ENCODE measurements at regions of chr15 and their contacts with region 1.

Region 1: DNA sequence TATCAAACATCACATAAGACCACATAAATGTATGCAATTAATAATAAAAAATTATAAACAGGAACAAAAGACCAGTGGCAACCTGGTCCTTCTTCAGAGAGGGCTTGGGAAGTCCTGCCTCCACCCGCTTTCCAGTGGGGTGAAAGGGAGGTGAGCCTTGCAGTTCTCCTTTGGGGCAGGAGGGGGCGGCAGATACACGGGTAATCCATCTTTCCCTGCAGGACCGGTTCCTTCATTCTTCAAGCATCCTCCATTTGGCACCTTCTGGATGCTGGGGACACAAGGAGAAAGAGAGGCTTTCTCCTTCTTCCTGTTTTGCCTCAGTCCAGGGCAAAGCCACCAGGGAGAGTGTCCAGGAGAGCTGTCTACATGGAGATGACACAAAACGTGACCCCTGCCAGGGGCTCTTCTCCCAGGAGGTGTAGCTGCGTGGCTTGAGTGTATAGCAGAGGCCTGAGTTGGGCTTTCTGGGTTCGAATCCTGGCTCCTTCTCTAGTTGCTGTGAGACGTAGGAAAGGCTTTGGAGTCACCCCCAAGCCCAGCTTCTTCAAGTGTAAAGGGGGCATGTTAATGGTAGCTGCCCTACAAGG is 23.2 kb downstream of the RPLP1 start:
- DNase-seq: peak; percentile 72
- CTCF ChIP-seq: peak; percentile 85

Region 2: GRCh38 chr15:69623392-69624152 is 147.7 kb after region 1 on chr15:
- in situ Hi-C with region 1: no loop called
- DNase-seq: no peak
- CTCF ChIP-seq: no peak

Region 3: DNA sequence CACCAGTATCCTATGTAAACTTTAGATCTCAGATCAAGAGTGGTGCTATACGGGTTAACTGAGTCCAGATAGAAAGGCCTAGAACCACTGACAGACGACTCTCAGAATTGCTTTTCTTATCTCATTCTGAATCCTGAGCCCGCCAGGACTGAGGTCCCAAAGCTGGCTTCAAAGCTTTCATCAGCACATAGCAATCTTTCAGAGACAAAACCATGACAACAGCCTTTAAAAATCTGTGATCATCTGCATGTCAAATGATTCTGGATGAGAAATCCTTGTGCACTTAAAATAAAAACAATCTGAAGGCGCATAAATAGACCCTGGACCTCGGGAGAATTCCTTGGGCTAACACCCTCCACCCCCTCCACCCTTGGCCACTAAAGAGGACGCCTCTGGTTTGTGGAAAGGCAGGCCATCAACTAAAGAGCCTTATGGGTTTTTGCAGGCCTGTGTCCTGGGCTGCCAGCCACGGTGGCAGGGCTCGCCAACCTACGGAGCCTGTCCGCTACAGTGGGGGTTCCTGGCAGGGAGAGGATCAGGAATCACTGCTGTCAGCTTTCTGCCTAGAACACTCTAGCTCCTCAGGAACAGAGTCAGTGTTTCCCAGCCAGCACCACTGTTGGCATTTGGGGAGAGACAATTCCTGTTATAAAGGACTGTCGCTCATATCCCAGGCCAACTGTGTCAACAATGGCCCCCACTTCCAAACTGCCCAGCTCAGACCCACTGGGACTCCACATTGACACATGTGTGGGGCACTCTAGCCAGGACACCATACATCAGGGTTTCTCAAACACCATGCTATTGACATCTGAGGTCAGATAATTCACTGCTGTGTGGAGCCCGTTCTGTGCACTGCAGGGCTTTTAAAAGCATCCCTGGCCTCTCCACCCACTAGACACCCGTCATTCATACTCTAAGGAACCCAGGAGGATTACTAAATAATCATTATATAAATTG is 601.6 kb after region 1 on chr15:
- in situ Hi-C with region 1: no loop called
- DNase-seq: no peak
- CTCF ChIP-seq: no peak

Region 4: DNA sequence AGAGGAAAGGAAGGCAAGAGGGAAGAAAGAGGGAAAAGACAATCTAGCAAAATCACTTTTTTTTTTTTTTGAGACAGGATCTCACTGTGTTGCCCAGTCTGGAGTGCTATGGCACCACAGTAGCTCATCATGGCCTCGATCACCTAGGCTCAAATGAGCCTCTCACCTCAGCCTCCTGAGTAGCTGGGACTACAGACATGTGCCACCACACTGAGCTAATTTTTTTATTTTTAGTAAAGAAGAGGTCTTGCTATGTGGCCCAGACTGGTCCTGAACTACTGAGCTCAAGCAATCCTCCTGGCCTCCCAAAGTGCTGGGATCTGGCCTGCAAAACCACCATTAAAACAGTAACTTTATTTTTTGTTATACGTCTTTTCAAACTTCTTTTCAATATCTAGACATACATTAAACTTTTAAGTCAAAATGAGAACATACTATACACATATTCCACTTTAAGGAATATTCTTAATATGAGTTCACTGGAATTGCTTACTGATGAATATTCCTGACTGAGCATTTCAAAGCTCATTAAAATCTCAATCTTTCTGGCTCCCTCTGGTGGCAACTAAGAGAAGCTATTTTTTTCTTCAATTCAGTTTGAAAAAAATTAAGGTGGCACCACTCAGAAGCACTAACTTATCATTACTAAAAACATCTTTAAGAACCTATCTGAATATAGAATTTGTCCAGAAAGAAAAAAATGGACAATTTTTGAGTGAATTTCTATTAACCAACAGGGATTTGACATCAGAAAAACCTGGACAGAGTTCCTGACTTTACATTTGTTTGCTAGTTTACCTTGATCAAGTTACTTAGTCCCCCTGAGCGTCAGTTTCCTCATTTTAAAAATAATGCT is 1246.6 kb after region 1 on chr15:
- in situ Hi-C with region 1: loop called (anchors 25 kb)
- DNase-seq: peak; percentile 43
- CTCF ChIP-seq: peak; percentile 55